K562 (cell line): ENCODE measurements at regions of chr13 and their contacts with region 1.

Region 1: GRCh38 chr13:78603240-78603957 is at the start of gene POU4F1:
- DNase-seq: peak; percentile 87 to 92 (median 90)
- ATAC-seq: peak; percentile 96
- H3K4me3 ChIP-seq: peak within 1 kb of the TSS; percentile 52
- H3K27ac ChIP-seq: no peak within 1 kb of the TSS
- H3K4me1 ChIP-seq: peaks cover 7 to 18% of the 10 kb centered on the region in 2 experiments; a peak in 3 of 5 replicates
- H3K27me3 ChIP-seq: no peaks in the 10 kb centered on the region
- CTCF ChIP-seq: no peak
- EP300 ChIP-seq: no peak
- POLR2A ChIP-seq: no peak
- RAD21 ChIP-seq: no peak
- polyA plus RNA-seq, gene POU4F1: 0.61 to 0.62 TPM

Region 2: DNA sequence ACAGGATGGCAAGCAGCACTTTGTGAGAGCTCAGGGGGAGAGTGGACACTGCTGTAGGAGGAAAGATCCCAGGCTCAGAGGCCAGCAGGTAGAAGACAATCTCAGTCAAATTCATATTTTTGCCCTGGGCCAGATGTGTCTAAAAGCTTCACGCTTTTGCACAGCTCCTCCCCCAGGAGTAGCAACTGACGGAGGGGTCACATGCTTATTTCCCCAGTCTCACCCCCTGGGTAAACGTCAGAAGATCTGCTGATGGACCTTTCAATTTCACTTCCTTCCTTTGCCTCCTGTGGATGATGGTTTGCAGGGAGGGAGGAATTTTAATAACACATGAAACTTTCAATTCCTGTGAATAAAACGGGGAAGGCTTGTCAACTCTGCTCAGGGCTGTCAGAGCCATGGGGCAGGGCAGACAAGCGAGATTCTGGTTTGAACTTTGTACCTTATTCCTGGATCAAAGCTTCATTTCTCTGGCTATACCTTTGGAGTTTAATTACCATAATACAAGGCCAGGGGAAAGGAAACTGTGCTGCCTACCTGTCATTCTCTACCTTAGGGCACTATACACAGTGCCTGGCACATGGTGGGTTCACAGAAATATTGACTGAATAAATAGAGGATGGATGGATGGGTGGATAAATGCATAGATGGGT is 41.0 kb before region 1 on chr13:
- CTCF ChIA-PET with region 1: no interaction called
- POLR2A ChIA-PET with region 1: no interaction called
- in situ Hi-C with region 1: no loop called
- intact Hi-C with region 1: no loop called
- DNase-seq: no peak
- ATAC-seq: no peak
- H3K4me3 ChIP-seq: no peak overlapping the region
- H3K27ac ChIP-seq: no peak overlapping the region
- H3K4me1 ChIP-seq: no peaks in the 10 kb centered on the region
- H3K27me3 ChIP-seq: no peaks in the 10 kb centered on the region
- CTCF ChIP-seq: no peak
- EP300 ChIP-seq: no peak
- POLR2A ChIP-seq: no peak
- RAD21 ChIP-seq: no peak

Region 3: DNA sequence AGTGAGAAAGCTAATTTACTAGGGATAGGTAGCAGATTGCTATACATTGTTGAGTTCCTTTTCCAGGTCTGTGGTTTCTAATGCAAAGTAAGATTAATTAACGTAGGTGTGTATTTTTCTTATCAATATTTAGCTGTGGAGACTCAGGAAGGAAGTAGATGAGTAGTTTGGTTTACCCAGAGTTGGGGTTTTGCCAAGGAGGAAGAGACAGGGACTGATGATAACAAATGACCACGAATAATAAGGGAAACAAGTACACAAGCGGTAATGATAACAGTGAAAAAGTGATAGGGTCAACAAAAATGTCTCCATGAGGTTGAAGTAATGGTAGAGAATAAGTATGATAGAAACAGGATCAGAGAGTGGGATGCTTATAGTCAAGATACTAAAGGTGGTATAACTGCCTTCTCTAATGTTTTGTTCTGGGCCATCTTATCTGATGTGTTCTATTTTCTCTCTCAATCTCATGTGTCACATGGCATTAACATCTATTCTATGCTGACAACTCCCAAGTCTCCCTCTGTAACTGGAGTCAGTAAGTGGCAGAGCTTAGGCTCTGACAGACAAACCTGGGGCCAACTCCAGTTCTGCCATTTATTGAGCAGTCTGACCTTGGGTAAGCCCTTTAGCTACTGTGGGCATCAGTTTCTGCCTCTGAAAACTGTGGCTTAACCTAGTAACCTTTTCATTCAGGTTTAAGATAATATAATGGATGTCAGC is 46.8 kb after region 1 on chr13:
- CTCF ChIA-PET with region 1: no interaction called
- POLR2A ChIA-PET with region 1: no interaction called
- in situ Hi-C with region 1: no loop called
- intact Hi-C with region 1: loop called (anchors 1 kb)
- DNase-seq: peak in 1 of 4 experiments; percentile 24
- ATAC-seq: peak; percentile 27
- H3K4me3 ChIP-seq: no peak overlapping the region
- H3K27ac ChIP-seq: no peak overlapping the region
- H3K4me1 ChIP-seq: peaks cover 4 to 29% of the 10 kb centered on the region in 2 experiments; a peak in 2 of 5 replicates
- H3K27me3 ChIP-seq: no peaks in the 10 kb centered on the region
- CTCF ChIP-seq: no peak
- EP300 ChIP-seq: no peak
- POLR2A ChIP-seq: no peak
- RAD21 ChIP-seq: no peak

Region 4: GRCh38 chr13:78658635-78659449 is 55.4 kb after region 1 on chr13 and contains the start of gene OBI1:
- CTCF ChIA-PET with region 1: no interaction called
- POLR2A ChIA-PET with region 1: no interaction called
- in situ Hi-C with region 1: no loop called
- intact Hi-C with region 1: loop called (anchors 2 kb)
- DNase-seq: peak; percentile 75 to 87 (median 78)
- ATAC-seq: peak; percentile 92
- H3K4me3 ChIP-seq: peak within 1 kb of the TSS; percentile 61
- H3K27ac ChIP-seq: peak within 1 kb of the TSS; percentile 88
- H3K4me1 ChIP-seq: peaks cover 0 to 3% of the 10 kb centered on the region in 2 experiments; a peak in 3 of 5 replicates
- H3K27me3 ChIP-seq: no peaks in the 10 kb centered on the region
- CTCF ChIP-seq: no peak
- EP300 ChIP-seq: no peak
- POLR2A ChIP-seq: peak; percentile 83
- RAD21 ChIP-seq: no peak
- polyA plus RNA-seq, gene OBI1: 9.0 to 14.2 TPM